Heart right ventricle (tissue), 16 donors: ENCODE measurements at regions of chr9 and their contacts with region 1.

Region 1: GRCh38 chr9:105608721-105609598 is 51.0 kb downstream of the FKTN start:
- DNase-seq: peak in 1 of 2 donors; percentile 6
- ATAC-seq: no peak
- H3K4me3 ChIP-seq: no peak overlapping the region
- H3K27ac ChIP-seq: no peak overlapping the region
- H3K4me1 ChIP-seq: no peaks in the 10 kb centered on the region
- H3K27me3 ChIP-seq: no peaks in the 10 kb centered on the region
- CTCF ChIP-seq: peak in 8 of 9 donors; percentile 31 to 71 (median 61)

Region 2: DNA sequence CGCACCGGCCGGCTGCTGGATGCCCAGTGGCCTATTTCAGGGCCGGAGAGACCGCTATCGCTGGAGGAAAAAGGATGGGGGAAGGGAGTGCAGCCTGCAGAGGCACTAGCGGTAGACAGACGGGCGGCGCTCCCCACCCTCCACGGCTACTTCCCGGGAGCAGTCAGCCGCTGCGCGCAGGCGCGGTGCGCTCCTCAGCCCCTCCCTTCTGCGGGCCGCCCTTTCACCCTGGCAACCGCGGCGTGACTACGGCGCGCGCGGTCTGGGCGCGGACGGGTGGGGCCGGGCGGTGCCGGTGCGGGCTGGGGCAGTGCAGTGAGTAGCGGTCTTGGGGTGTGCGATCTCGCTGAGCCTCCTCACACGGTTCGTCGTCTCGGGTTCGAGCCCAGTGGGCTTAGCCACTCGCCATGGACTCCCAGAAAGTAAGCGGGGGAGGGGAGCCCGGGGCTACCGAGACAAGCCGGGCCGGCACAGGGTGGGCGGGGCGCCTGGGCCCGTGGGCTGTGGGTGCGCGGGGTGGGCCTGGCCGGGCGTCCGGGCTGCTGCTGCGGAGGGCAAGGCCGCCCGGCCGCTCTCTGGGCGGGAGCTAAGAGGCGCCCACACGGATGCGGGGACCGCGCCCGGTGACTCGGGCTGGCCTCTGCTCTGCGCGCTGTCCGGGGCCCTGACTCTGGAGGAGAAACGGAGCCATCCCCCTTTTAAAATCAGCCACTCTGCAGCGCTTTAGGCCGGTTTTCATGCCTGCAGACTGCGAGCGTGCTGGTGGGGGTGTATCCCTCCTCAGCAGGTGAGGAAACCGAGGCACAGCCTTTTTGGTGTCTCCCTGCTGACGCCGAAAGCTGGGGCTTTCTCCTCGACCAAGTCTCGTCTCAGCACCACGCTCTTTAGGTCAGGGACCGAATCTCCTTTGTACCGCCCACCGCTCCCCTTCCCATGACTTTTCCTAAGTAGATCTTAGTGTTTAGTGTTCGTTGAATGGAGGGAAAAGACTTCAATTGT is 160.8 kb before region 1 on chr9 and contains the start of gene FSD1L:
- intact Hi-C with region 1: no loop called
- DNase-seq: peak; percentile 92 to 96
- ATAC-seq: peak; percentile 96 to 98 (median 97)
- H3K4me3 ChIP-seq: peak within 1 kb of the TSS; percentile 58 to 92 (median 76)
- H3K27ac ChIP-seq: peak within 1 kb of the TSS; percentile 57 to 89 (median 78)
- H3K4me1 ChIP-seq: peaks cover 0 to 50% (median 26%) of the 10 kb centered on the region in 9 donors
- H3K27me3 ChIP-seq: no peaks in the 10 kb centered on the region
- CTCF ChIP-seq: peak in 8 of 9 donors; percentile 9 to 65 (median 42)
- total RNA-seq, gene FSD1L: 4.2 to 16.3 (median 8.8) TPM

Region 3: GRCh38 chr9:105496826-105497225 is 112.1 kb before region 1 on chr9:
- intact Hi-C with region 1: no loop called
- DNase-seq: no peak
- ATAC-seq: no peak
- H3K4me3 ChIP-seq: no peak overlapping the region
- H3K27ac ChIP-seq: no peak overlapping the region
- H3K4me1 ChIP-seq: peaks cover 0 to 21% (median 0%) of the 10 kb centered on the region in 9 donors
- H3K27me3 ChIP-seq: no peaks in the 10 kb centered on the region
- CTCF ChIP-seq: no peak

Region 4: GRCh38 chr9:105541838-105542237 is 67.1 kb before region 1 on chr9:
- intact Hi-C with region 1: no loop called
- DNase-seq: no peak
- ATAC-seq: no peak
- H3K4me3 ChIP-seq: no peak overlapping the region
- H3K27ac ChIP-seq: no peak overlapping the region
- H3K4me1 ChIP-seq: no peaks in the 10 kb centered on the region
- H3K27me3 ChIP-seq: no peaks in the 10 kb centered on the region
- CTCF ChIP-seq: no peak

Region 5: GRCh38 chr9:105632807-105633206 is 23.8 kb after region 1 on chr9:
- intact Hi-C with region 1: no loop called
- DNase-seq: no peak
- ATAC-seq: no peak
- H3K4me3 ChIP-seq: no peak overlapping the region
- H3K27ac ChIP-seq: no peak overlapping the region
- H3K4me1 ChIP-seq: no peaks in the 10 kb centered on the region
- H3K27me3 ChIP-seq: no peaks in the 10 kb centered on the region
- CTCF ChIP-seq: no peak

Region 6: DNA sequence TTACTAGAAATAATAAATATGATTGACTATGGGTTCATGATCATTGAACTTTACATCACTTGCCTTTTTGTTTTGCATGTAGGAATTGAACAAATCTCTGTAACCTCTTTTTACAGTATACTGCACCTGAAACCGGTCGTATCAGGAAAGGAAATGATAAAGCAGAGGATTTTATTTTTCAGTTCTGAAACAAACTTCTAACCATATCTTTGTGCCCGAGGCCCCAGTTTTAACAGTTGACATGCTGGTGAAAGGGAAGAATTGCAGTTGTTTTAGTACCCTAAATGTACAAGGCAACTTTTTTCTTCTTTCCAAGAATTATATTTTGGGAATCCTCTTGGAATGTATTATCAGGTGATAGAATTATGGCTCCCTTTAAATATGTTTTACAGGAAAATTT is 113.1 kb after region 1 on chr9:
- intact Hi-C with region 1: loop called in 6 of 10 experiments (anchors 2 to 10 kb)
- DNase-seq: no peak
- ATAC-seq: no peak
- H3K4me3 ChIP-seq: no peak overlapping the region
- H3K27ac ChIP-seq: no peak overlapping the region
- H3K4me1 ChIP-seq: no peaks in the 10 kb centered on the region
- H3K27me3 ChIP-seq: no peaks in the 10 kb centered on the region
- CTCF ChIP-seq: no peak

Region 7: GRCh38 chr9:105881654-105882349 is 272.8 kb after region 1 on chr9:
- intact Hi-C with region 1: loop called in 4 of 10 experiments (anchors 5 to 10 kb)
- DNase-seq: peak; percentile 40 to 44
- ATAC-seq: peak in 2 of 8 donors; percentile 34 to 51
- H3K4me3 ChIP-seq: no peak overlapping the region
- H3K27ac ChIP-seq: no peak overlapping the region
- H3K4me1 ChIP-seq: no peaks in the 10 kb centered on the region
- H3K27me3 ChIP-seq: no peaks in the 10 kb centered on the region
- CTCF ChIP-seq: peak; percentile 52 to 93 (median 86)